ENCODE measurements at regions of chr1 and their contacts with region 1.

Region 1: DNA sequence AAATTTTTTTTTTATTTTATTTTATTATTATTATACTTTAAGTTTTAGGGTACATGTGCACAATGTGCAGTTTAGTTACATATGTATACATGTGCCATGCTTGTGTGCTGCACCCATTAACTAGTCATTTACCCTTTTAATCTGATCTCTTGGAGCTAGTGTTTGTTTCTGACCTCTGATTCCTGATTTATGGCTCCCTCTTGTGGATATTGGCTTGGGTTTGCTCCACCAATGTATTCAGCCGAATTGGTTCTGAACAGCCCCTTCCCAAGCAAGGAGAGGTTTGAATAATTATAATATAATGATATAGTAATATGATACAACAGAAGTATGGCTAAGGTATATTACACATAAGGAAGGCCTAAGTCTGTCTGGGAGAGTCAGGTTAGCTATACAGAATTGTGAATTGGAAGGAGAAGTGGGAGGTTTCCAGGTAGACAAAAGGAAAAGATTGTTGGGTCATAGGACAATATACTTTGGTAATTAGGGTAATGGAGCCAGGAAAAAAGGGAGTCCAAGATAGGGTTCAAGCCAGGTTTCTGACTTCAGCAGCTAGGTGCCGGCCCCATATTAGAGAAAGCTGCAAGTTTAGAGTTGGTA is 53.1 kb upstream of the HMCN1 start:
- DNase-seq: peak; percentile 16
- ATAC-seq: peak; percentile 73
- H3K4me3 Mint-ChIP-seq: no peak overlapping the region
- H3K27ac Mint-ChIP-seq: no peak overlapping the region
- H3K4me1 Mint-ChIP-seq: peaks cover 25% of the 10 kb centered on the region
- H3K27me3 Mint-ChIP-seq: no peaks in the 10 kb centered on the region

Region 2: DNA sequence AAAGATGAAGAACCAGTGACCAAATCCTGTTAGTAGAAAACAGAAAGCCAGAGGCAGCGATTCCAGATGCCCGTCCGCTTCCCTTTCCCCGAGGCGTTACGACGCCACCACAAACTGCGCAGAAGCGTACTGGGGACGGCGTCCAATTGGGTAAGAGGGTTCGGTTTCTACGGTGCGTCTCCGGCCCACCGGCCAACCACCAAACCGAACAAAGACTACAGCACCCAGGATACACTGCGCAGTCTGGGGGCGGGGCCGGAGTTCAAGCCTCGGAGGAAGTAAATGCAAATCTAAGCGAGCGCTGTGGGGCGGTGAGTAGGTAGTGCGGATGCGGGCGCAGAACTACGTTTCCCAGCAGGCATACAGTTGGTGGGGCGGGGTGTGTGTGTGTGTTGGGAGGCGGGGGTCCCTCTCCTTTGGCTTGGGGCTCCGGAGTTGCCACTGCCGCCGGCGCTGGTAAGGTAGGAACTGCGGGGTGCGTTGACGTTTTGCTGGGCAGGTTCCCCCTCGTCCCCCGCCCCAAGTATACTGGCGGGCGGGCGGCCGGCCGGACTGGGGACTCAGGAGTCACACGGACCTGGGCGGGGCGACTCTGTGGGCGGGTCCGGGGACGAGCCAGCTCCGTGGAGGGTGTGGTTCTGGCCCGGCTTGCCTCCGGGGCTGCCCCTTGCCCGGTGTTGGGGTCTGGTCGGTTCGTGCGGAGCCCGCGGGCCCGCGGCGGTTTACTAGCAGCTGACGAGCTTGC is 524.1 kb before region 1 on chr1 and contains the starts of genes SWT1 and TRMT1L:
- CTCF ChIA-PET with region 1: no interaction called
- POLR2A ChIA-PET with region 1: no interaction called
- intact Hi-C with region 1: loop called in 1 of 2 experiments (anchors 2 kb)
- DNase-seq: peak; percentile 99
- ATAC-seq: peak; percentile 94
- H3K4me3 Mint-ChIP-seq: peak within 1 kb of the TSS; percentile 91
- H3K27ac Mint-ChIP-seq: peak within 1 kb of the TSS; percentile 95
- H3K4me1 Mint-ChIP-seq: peaks cover 50% of the 10 kb centered on the region
- H3K27me3 Mint-ChIP-seq: no peaks in the 10 kb centered on the region
- total RNA-seq, gene SWT1: 3.0 to 3.3 TPM
- total RNA-seq, gene TRMT1L: 33.7 to 38.7 TPM

Region 3: GRCh38 chr1:185238447-185238846 is 442.7 kb before region 1 on chr1:
- CTCF ChIA-PET with region 1: interaction called, 12 read pairs
- POLR2A ChIA-PET with region 1: no interaction called
- intact Hi-C with region 1: loop called (anchors 2 to 5 kb)
- DNase-seq: no peak
- ATAC-seq: no peak
- H3K4me3 Mint-ChIP-seq: no peak overlapping the region
- H3K27ac Mint-ChIP-seq: no peak overlapping the region
- H3K4me1 Mint-ChIP-seq: peaks cover 29% of the 10 kb centered on the region
- H3K27me3 Mint-ChIP-seq: no peaks in the 10 kb centered on the region

Region 4: DNA sequence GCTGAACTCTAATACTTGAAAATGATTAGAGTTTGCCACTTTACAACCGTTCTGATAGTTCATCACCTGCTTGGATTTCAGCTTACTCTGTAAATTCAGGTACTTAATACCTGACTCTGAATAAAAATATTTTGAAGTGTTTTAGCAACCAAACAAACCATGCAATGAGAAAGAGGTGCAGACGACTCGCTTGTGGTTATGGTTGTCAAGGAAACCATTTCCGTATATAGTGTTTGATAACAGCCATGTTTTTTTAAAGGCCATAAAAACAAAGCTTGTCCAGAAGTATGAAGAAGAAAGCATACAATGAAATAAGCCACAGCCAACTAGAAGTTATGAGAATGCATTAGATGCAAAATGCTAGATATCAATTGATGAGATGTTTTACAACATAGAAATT is 114.1 kb before region 1 on chr1:
- CTCF ChIA-PET with region 1: interaction called, 5 read pairs
- POLR2A ChIA-PET with region 1: no interaction called
- intact Hi-C with region 1: loop called in 1 of 2 experiments (anchors 5 kb)
- DNase-seq: peak; percentile 41
- ATAC-seq: peak; percentile 57
- H3K4me3 Mint-ChIP-seq: peak overlapping the region; percentile 22
- H3K27ac Mint-ChIP-seq: peak overlapping the region; percentile 79
- H3K4me1 Mint-ChIP-seq: peaks cover 70% of the 10 kb centered on the region
- H3K27me3 Mint-ChIP-seq: no peaks in the 10 kb centered on the region

Region 5: GRCh38 chr1:185652348-185652747 is 28.8 kb before region 1 on chr1:
- CTCF ChIA-PET with region 1: interaction called, 12 read pairs
- POLR2A ChIA-PET with region 1: no interaction called
- intact Hi-C with region 1: no loop called
- DNase-seq: no peak
- ATAC-seq: peak; percentile 42
- H3K4me3 Mint-ChIP-seq: no peak overlapping the region
- H3K27ac Mint-ChIP-seq: no peak overlapping the region
- H3K4me1 Mint-ChIP-seq: peaks cover 9% of the 10 kb centered on the region
- H3K27me3 Mint-ChIP-seq: no peaks in the 10 kb centered on the region

Region 6: DNA sequence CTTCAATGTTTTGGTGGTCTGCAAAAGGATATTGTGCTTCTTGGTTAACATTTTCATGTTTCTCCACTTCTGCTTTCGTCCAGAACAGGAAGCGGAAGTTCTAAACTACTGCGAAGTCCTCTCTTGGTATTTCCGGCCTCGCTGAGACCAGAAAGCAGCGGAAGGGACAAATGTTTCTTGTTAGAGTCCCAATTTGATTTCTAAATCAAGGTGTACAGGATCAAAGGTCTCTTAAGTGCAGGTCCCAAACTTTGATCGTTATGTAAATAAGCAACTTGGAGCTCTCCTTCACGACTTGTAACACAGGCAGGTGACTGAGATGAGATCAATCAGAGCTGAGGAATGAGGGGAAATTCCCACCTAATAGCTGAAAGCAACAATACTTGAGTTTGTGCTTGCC is 12.9 kb after region 1 on chr1:
- CTCF ChIA-PET with region 1: interaction called, 24 read pairs
- POLR2A ChIA-PET with region 1: no interaction called
- intact Hi-C with region 1: no loop called
- DNase-seq: peak; percentile 41
- ATAC-seq: peak; percentile 48
- H3K4me3 Mint-ChIP-seq: peak overlapping the region; percentile 65
- H3K27ac Mint-ChIP-seq: peak overlapping the region; percentile 91
- H3K4me1 Mint-ChIP-seq: peaks cover 18% of the 10 kb centered on the region
- H3K27me3 Mint-ChIP-seq: peaks cover 4% of the 10 kb centered on the region

Measured in activated CD4-positive, alpha-beta T cell treated with anti-CD3 and anti-CD28 coated beads for 36 hours (primary cell).